ENCODE measurements at regions of chr12 and their contacts with region 1.

Region 1: DNA sequence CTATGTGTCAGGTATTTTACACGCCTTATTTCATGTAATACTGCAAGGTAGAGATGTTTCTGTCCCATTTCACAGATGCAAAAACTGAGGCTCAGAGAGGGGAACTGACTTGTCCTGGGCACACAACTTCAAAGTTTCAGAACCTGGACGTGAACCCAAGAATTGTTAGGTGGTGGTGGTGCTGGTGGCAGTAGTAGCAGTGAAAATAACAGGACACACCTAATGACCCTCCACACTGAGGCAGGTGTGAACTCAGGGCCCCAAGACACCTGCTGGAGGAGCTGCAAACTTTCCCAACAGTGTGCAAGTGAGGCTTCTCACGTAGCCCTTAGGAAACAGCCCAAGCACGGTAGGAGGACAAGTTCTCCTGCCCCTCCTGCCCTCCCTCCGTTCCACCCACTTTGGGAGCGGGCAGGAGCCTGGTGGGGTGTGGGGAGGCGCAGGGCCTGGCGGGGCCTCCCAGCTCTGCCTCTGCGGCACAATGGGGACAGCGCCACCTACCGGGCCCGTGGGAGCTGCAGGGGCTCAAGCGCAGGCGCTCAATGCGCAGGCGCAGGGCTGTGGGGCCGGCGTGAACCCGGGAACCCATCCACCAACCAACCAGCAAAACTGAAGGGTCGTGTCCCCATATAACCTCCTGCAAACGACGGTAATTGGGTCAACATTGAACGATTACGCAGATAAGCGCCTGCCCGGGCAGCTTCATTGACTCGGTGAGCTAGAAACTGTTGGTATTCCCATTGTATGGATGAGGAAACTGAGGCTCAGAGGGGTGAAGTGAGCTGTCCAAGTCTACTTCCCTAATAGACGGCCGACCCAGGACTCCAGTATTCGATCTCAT is 12.0 kb upstream of the TRPV4 start:
- DNase-seq: peak; percentile 42
- ATAC-seq: peak; percentile 97
- H3K4me3 ChIP-seq: peak overlapping the region; percentile 13; the same call in 1 of the 2 replicates
- H3K27ac ChIP-seq: no peak overlapping the region
- H3K4me1 ChIP-seq: peaks cover 8% of the 10 kb centered on the region
- H3K27me3 ChIP-seq: no peaks in the 10 kb centered on the region
- CTCF ChIP-seq: peak; percentile 98 to 99 (median 98); a peak in 5 of 6 replicates
- EP300 ChIP-seq: no peak
- POLR2A ChIP-seq: no peak
- RAD21 ChIP-seq: peak; percentile 77

Region 2: GRCh38 chr12:109597795-109598427 is 247.3 kb before region 1 on chr12:
- CTCF ChIA-PET with region 1: interaction called, 20 read pairs
- POLR2A ChIA-PET with region 1: no interaction called
- RAD21 ChIA-PET with region 1: no interaction called
- SMC1A ChIA-PET with region 1: interaction called, 3 read pairs
- in situ Hi-C with region 1: no loop called
- intact Hi-C with region 1: no loop called
- DNase-seq: no peak
- ATAC-seq: peak; percentile 89
- H3K4me3 ChIP-seq: no peak overlapping the region
- H3K27ac ChIP-seq: no peak overlapping the region
- H3K4me1 ChIP-seq: peaks cover 4% of the 10 kb centered on the region; the same call in 1 of the 2 replicates
- H3K27me3 ChIP-seq: no peaks in the 10 kb centered on the region
- CTCF ChIP-seq: peak; percentile 77 to 98 (median 94)
- EP300 ChIP-seq: no peak
- POLR2A ChIP-seq: 0 out of 2 replicates have a peak, but pooled peaks have one; percentile 27
- RAD21 ChIP-seq: peak; percentile 63

Region 3: GRCh38 chr12:109795023-109795422 is 50.2 kb before region 1 on chr12:
- CTCF ChIA-PET with region 1: interaction called, 12 read pairs
- POLR2A ChIA-PET with region 1: no interaction called
- RAD21 ChIA-PET with region 1: no interaction called
- SMC1A ChIA-PET with region 1: interaction called, 3 read pairs
- in situ Hi-C with region 1: no loop called
- intact Hi-C with region 1: no loop called
- DNase-seq: no peak
- ATAC-seq: no peak
- H3K4me3 ChIP-seq: no peak overlapping the region
- H3K27ac ChIP-seq: no peak overlapping the region
- H3K4me1 ChIP-seq: no peaks in the 10 kb centered on the region
- H3K27me3 ChIP-seq: no peaks in the 10 kb centered on the region; a peak in 1 of 4 replicates
- CTCF ChIP-seq: no peak
- EP300 ChIP-seq: no peak
- POLR2A ChIP-seq: no peak
- RAD21 ChIP-seq: no peak

Region 4: GRCh38 chr12:109811624-109811995 is 33.6 kb before region 1 on chr12:
- CTCF ChIA-PET with region 1: interaction called, 139 read pairs
- POLR2A ChIA-PET with region 1: no interaction called
- RAD21 ChIA-PET with region 1: interaction called, 12 read pairs
- SMC1A ChIA-PET with region 1: interaction called, 40 read pairs
- in situ Hi-C with region 1: no loop called
- intact Hi-C with region 1: no loop called
- DNase-seq: no peak
- ATAC-seq: no peak
- H3K4me3 ChIP-seq: no peak overlapping the region
- H3K27ac ChIP-seq: no peak overlapping the region
- H3K4me1 ChIP-seq: no peaks in the 10 kb centered on the region
- H3K27me3 ChIP-seq: no peaks in the 10 kb centered on the region
- CTCF ChIP-seq: no peak
- EP300 ChIP-seq: no peak
- POLR2A ChIP-seq: no peak
- RAD21 ChIP-seq: no peak

Region 5: DNA sequence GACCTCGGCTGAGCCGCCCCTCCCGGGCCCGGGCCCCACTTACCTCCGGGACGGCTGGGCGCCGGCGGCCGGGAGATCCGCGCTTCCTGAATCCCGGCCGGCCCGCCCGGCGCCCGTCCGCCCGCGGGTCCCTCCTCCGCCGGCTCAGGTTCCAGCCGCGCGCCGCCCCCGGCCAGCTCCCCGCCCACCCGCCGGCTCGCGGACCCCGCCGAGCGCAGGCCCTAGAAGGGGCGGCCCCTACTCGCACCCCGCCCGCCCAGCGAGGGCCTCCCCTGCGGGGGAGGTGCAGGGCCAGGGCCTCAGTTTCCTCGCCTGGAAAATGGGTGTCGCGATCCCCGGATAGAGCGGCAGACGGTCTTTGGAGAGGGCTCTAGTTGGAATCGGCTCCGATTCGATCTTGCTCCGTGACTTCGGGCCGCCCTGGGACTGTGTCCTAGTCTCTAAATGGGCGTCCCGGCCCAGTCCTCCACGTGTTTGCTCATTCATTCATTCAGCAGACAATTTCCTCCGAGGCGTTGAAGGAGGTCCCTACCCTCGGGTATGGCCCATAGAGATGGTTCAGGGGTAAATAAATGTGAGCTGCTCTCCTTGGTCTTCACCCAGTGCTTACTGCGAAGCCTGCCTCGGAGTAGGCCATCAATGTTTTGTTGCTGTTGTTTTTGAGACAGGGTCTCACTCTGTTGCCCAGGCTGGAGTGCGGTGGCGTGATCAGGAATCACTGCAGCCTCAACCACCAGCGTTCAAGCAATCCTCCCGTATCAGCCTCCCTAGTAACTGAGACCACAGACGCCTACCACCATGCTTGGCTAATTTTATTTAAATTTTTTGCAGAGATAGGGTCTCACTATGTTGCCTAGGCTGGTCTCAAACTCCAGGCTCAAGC is 11.7 kb before region 1 on chr12 and contains the start of gene TRPV4:
- CTCF ChIA-PET with region 1: interaction called, 18 read pairs
- POLR2A ChIA-PET with region 1: no interaction called
- RAD21 ChIA-PET with region 1: no interaction called
- SMC1A ChIA-PET with region 1: no interaction called
- in situ Hi-C with region 1: no loop called
- intact Hi-C with region 1: no loop called
- DNase-seq: no peak
- ATAC-seq: no peak
- H3K4me3 ChIP-seq: no peak within 1 kb of the TSS
- H3K27ac ChIP-seq: no peak within 1 kb of the TSS
- H3K4me1 ChIP-seq: no peaks in the 10 kb centered on the region
- H3K27me3 ChIP-seq: peaks cover 3 to 4% of the 10 kb centered on the region in 2 experiments
- CTCF ChIP-seq: no peak
- EP300 ChIP-seq: no peak
- POLR2A ChIP-seq: no peak
- RAD21 ChIP-seq: no peak
- polyA plus RNA-seq, gene TRPV4: not detected

Region 6: GRCh38 chr12:109880016-109880931 is 35.1 kb after region 1 on chr12 and contains the start of gene GLTP:
- CTCF ChIA-PET with region 1: interaction called, 28 read pairs
- POLR2A ChIA-PET with region 1: interaction called, 3 read pairs
- RAD21 ChIA-PET with region 1: interaction called, 17 read pairs
- SMC1A ChIA-PET with region 1: interaction called, 47 read pairs
- in situ Hi-C with region 1: no loop called
- intact Hi-C with region 1: no loop called
- DNase-seq: no peak
- ATAC-seq: peak; percentile 91
- H3K4me3 ChIP-seq: peak within 1 kb of the TSS; percentile 97
- H3K27ac ChIP-seq: no peak within 1 kb of the TSS; the same call in 1 of the 2 replicates
- H3K4me1 ChIP-seq: peaks cover 26% of the 10 kb centered on the region
- H3K27me3 ChIP-seq: no peaks in the 10 kb centered on the region
- CTCF ChIP-seq: peak; percentile 43 to 86 (median 50); a peak in 4 of 6 replicates
- EP300 ChIP-seq: no peak
- POLR2A ChIP-seq: peak; percentile 75
- RAD21 ChIP-seq: peak; percentile 78
- polyA plus RNA-seq, gene GLTP: 19.8 to 20.3 TPM

Measured in GM12878 (cell line).